ENCODE measurements at regions of chr5 and their contacts with region 1.

Region 1: DNA sequence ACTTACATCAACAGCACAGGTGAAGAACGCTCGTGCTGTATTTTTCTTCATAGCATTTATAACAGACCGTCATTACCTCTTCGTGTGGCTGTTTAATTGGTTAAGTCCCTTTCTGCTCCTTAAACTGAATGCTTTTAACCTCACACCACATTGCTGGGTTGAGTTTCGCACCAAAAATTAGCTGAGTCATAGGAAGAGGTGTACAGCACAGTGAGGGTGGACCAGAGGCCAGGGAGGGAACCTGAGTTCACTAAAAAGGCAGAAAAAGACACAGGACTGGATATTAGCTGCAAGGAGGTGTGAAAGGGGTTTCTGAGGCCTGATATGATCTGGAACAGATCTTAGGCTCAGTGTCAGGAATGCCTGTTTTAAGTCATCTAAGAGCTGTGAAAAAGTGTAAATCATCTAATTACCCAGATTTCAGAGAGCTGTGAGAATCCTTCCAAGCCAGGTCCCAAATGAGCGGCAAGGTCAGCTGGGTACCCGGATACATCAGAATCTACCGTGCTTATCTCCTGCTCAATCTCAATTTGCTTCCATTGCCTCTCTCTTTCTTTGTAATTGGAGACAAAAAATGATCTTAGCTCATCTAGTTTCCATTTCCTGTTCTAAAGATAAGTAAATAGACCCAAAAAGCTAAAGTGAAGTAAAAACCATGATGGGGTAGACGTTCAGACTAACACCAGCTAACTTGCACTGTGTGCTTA is 7.1 kb upstream of the CFAP90 start:
- DNase-seq: no peak
- H3K4me3 Mint-ChIP-seq: no peak overlapping the region
- H3K27ac Mint-ChIP-seq: peak overlapping the region; percentile 84
- H3K4me1 Mint-ChIP-seq: peaks cover 21% of the 10 kb centered on the region
- H3K27me3 Mint-ChIP-seq: peaks cover 2% of the 10 kb centered on the region

Region 2: DNA sequence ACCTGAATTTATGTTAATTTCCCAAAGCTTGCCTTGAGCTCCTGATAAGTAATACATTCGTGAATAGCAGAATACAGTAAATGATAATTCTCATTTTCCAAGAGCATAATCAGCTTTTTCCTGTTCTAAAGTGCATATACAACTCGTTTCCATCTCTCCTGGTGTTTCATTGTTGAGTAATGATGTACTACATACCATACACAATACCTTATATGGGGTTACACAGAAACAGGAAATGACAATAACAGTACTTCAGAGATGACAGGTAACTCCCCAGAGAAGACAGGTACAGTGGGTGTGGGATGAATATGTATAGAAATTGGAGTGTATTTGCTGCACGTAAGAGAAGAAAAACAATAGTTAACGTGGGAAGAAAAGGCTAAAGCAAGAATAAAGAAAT is 857.8 kb before region 1 on chr5:
- CTCF ChIA-PET with region 1: no interaction called
- POLR2A ChIA-PET with region 1: no interaction called
- DNase-seq: no peak
- H3K4me3 Mint-ChIP-seq: no peak overlapping the region
- H3K27ac Mint-ChIP-seq: no peak overlapping the region
- H3K4me1 Mint-ChIP-seq: no peaks in the 10 kb centered on the region
- H3K27me3 Mint-ChIP-seq: no peaks in the 10 kb centered on the region

Region 3: GRCh38 chr5:7871653-7872052 is 13.6 kb after region 1 on chr5:
- CTCF ChIA-PET with region 1: interaction called, 10 read pairs
- POLR2A ChIA-PET with region 1: interaction called, 9 read pairs
- DNase-seq: no peak
- H3K4me3 Mint-ChIP-seq: peak overlapping the region; percentile 1
- H3K27ac Mint-ChIP-seq: peak overlapping the region; percentile 51
- H3K4me1 Mint-ChIP-seq: peaks cover 69% of the 10 kb centered on the region
- H3K27me3 Mint-ChIP-seq: no peaks in the 10 kb centered on the region